ENCODE measurements at regions of chr5 and their contacts with region 1.

Region 1: GRCh38 chr5:139517683-139518564 is 35.4 kb upstream of the STING1 start:
- DNase-seq: peak; percentile 98
- ATAC-seq: peak; percentile 91

Region 2: GRCh38 chr5:139422307-139422893 is 95.5 kb before region 1 on chr5:
- intact Hi-C with region 1: loop called (anchors 1 kb)
- DNase-seq: no peak
- ATAC-seq: no peak

Region 3: GRCh38 chr5:139439013-139439903 is 78.7 kb before region 1 on chr5 and contains the start of gene DNAJC18:
- intact Hi-C with region 1: loop called (anchors 1 kb)
- DNase-seq: peak; percentile 98
- ATAC-seq: peak; percentile 99
- total RNA-seq, gene DNAJC18: 7.9 TPM

Region 4: DNA sequence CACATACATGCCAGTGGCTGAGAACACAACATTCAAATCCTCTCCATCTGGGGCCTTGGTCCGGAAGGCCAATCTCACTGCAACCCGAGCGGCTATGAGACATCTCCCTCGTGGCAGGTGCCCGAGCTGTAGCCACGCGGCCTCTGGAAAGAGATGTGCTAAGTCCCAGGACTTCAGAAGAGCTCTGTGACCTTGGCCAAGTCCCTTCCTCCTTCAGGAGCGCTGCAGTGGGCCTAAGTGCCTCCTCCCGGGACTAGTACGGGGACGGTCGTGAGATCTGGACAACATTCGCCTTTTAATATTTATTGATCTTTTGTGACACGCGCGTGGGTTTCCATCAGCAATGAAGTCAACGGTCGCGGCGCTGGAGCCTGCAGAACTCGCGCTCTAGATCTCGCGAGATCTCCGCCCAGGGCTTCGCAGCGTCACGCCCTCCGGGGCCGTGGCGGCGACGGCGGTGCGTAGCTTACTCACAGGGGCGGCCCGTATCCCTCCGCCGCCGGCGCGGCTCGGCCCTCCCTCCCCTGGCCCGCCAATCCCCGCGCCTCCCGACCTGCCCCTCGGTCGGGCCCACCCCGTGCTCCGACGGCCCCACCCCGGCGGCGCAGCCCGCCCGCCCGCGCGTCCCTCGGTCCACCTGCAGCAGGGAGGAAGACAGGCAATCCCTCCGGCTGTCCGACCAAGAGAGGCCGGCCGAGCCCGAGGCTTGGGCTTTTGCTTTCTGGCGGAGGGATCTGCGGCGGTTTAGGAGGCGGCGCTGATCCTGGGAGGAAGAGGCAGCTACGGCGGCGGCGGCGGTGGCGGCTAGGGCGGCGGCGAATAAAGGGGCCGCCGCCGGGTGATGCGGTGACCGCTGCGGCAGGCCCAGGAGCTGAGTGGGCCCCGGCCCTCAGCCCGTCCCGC is 43.1 kb after region 1 on chr5 and contains the start of gene UBE2D2:
- intact Hi-C with region 1: loop called (anchors 2 kb)
- DNase-seq: peak; percentile 99
- ATAC-seq: peak; percentile 99
- total RNA-seq, gene UBE2D2: 116 TPM

Region 5: DNA sequence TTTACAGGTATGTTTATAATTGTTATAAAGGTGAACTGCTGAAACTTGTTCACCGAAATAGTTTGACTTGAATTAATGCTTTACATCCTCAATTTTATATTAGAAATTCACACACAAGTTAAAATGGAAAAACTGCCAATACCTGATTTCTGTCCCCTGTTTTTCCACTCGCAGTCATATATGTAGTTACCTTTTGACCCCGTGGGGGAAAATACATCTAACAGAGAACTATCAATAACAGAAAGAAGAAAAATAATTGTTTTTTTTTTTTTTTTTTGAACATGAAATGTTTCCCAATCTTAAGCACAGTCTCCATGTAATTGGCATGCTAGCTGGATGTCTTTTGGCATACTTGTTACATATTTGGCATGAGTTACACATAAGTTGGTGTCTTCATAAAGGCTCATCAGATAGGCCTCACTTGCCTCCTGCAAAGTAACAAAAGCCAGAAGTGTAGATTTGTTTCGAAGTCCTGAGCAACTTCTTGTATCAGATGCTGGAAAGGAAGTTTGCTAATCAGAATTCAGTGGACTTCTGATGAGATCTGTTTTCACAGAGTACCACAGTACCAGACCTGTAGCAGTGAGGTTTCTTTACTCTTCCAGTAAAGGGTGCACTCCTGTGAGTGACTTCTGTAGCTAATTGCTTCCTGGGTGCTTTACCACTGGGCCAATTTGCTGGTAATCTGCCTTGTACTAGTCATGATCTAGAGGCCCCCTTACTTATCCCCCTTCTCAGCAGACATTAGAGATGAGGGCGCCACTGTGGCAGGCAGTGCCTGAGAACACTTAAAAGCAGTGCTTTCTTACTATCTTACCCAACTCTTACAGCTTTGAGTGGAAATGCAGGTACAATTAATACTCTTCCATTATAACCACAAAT is 94.0 kb after region 1 on chr5:
- intact Hi-C with region 1: no loop called
- DNase-seq: no peak
- ATAC-seq: no peak